ENCODE measurements at regions of chr9 and their contacts with region 1.

Region 1: GRCh38 chr9:83622939-83623678 is at the start of gene IDNK:
- DNase-seq: peak; percentile 69 to 86 (median 78)
- H3K4me3 ChIP-seq: peak within 1 kb of the TSS; percentile 61 to 75 (median 66)
- H3K27ac ChIP-seq: peak within 1 kb of the TSS; percentile 81 to 86
- H3K4me1 ChIP-seq: peaks cover 0 to 9% (median 0%) of the 10 kb centered on the region in 3 donors
- H3K27me3 ChIP-seq: no peaks in the 10 kb centered on the region
- CTCF ChIP-seq: no peak
- total RNA-seq, gene IDNK: 7.4 TPM

Region 2: GRCh38 chr9:83919111-83919510 is 296.0 kb after region 1 on chr9:
- intact Hi-C with region 1: loop called (anchors 10 kb)
- DNase-seq: no peak
- H3K4me3 ChIP-seq: no peak overlapping the region
- H3K27ac ChIP-seq: no peak overlapping the region
- H3K4me1 ChIP-seq: peaks cover 0 to 2% (median 2%) of the 10 kb centered on the region in 3 donors
- H3K27me3 ChIP-seq: no peaks in the 10 kb centered on the region
- CTCF ChIP-seq: no peak

Measured in kidney (tissue), 22 donors.